ENCODE measurements at regions of chr16 and their contacts with region 1.

Region 1: DNA sequence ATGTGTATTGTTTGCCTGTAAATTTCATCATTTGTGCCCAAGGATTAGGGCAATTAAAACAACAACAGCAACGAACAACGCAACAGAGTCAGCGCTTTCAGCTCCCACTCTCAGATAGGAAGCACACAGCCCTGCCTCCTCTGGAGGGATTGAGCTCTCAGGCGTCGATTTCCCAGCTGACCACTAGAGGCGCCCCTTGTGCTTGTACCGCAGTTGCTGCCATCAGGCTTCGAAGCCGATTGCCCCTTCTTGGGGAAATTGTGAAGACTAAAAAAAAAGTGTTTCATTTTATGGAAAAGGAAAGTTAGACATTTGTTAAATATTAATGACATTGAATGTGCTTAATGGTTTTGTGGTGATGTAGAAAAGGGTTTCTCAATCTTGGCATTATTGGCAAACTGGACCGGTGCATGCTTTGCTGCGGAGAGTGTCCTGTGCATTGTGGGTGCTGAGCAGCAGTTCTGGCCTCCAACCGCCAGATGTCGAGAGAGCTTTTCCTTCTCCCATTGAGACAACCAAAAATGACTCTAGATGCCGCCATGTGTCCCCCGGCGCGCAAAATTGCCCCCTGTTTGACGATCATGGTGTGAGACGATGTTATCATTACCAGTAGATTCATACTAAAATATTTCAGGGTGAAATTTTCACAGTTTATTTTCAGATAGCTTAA is 650.4 kb upstream of the RBFOX1 start:
- DNase-seq: no peak
- ATAC-seq: no peak
- H3K4me3 Mint-ChIP-seq: no peak overlapping the region
- H3K27ac Mint-ChIP-seq: no peak overlapping the region
- H3K4me1 Mint-ChIP-seq: no peaks in the 10 kb centered on the region
- H3K27me3 Mint-ChIP-seq: no peaks in the 10 kb centered on the region
- CTCF ChIP-seq: no peak

Region 2: GRCh38 chr16:8173111-8173644 is 1490.9 kb after region 1 on chr16:
- CTCF ChIA-PET with region 1: no interaction called
- POLR2A ChIA-PET with region 1: no interaction called
- intact Hi-C with region 1: loop called (anchors 10 kb)
- DNase-seq: no peak
- ATAC-seq: no peak
- H3K4me3 Mint-ChIP-seq: no peak overlapping the region
- H3K27ac Mint-ChIP-seq: no peak overlapping the region
- H3K4me1 Mint-ChIP-seq: no peaks in the 10 kb centered on the region
- H3K27me3 Mint-ChIP-seq: no peaks in the 10 kb centered on the region
- CTCF ChIP-seq: no peak

Measured in activated B cell treated with CpG ODN at 0.5 μM for 24 hours (primary cell).